Activated CD8-positive, alpha-beta memory T cell treated with anti-CD3 and anti-CD28 coated beads, Interleukin-2, amount 10 ng/mL, durations not matched to agents 7 days and 5 days (primary cell): ENCODE measurements at regions of chr12 and their contacts with region 1.

Region 1: DNA sequence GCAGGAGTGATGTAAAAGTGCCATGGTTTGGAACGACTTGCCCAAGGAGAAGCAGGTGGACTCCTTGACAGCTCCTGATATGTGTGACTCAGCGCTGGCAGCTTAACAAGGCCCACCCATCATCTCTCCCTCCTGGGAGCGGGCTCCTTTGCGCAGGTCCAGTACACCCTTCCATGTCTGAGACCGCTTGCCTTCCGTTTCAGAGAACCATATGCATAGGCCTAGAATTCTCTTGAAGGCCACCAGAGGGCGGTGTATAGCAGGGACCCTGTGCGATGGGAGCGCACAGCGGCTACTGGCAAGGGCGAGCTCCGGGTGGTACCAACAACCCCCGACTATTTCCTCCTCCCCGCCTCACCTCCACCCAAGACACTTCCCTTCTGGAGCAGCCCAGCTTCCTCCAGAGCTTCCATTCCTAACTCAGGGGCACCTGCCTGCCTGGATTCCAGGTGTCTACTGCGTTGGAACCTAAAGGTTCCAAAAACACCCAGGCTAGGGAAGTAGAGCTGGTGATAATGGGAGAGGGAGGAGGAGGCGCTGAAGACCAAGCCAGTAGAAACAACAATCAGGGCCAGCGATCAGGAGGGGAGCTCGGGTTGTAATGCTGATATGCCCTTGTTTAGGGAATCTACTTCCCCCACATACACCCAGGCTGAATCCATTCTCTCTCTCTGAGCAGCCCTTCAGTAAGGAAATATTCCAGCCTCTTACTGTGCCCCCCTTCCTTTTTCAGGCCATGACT is 6.2 kb downstream of the DHH start:
- DNase-seq: peak; percentile 82
- ATAC-seq: peak; percentile 86
- H3K4me3 Mint-ChIP-seq: no peak overlapping the region
- H3K27ac Mint-ChIP-seq: peak overlapping the region; percentile 6
- H3K4me1 Mint-ChIP-seq: peaks cover 68% of the 10 kb centered on the region
- H3K27me3 Mint-ChIP-seq: peaks cover 45% of the 10 kb centered on the region

Region 2: GRCh38 chr12:48750769-48751735 is 337.3 kb before region 1 on chr12:
- CTCF ChIA-PET with region 1: no interaction called
- DNase-seq: no peak
- ATAC-seq: peak; percentile 67
- H3K4me3 Mint-ChIP-seq: no peak overlapping the region
- H3K27ac Mint-ChIP-seq: peak overlapping the region; percentile 6
- H3K4me1 Mint-ChIP-seq: peaks cover 12% of the 10 kb centered on the region
- H3K27me3 Mint-ChIP-seq: peaks cover 11% of the 10 kb centered on the region

Region 3: GRCh38 chr12:48995061-48995879 is 93.1 kb before region 1 on chr12:
- CTCF ChIA-PET with region 1: interaction called, 28 read pairs
- DNase-seq: peak; percentile 65
- ATAC-seq: peak; percentile 44
- H3K4me3 Mint-ChIP-seq: no peak overlapping the region
- H3K27ac Mint-ChIP-seq: no peak overlapping the region
- H3K4me1 Mint-ChIP-seq: peaks cover 33% of the 10 kb centered on the region
- H3K27me3 Mint-ChIP-seq: peaks cover 60% of the 10 kb centered on the region

Region 4: DNA sequence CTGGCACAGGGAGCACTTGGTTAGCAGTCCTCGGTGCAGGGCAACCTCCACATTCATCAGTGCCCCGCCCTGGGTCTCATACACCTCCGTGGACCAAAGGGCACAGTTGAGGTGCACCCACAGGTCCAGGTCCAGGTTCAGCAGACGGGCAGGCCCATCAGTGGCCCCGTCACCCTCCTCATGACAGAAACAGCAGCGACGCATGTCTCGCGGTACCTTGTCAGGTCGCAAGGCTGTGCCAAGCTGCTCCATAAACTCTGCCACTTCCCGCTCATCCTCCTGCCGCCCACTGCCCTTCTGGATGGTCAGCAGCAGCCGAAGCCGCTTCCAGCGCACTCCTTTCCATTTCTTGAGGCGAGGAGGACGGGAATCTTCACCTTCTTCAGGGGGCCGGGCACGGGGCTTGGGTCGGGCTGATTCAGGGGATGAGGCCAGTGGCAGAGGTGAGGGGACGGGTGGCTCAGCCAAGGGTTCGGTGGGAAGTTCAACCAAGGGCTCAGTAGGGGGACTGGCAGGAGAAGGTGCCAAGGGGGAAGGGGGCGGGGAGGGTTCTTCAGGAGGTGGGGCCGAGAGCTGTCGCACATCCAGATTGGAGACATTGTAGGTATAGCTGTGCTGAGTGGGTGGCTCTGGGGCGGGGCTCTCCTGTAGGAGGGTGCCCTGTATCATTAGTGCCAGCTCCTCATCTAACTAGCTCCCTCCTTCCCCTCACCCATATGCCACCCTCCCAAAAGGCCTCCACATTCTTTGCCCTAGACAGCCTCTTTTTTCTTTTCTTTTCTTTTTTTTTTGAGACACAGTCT is 61.5 kb before region 1 on chr12:
- CTCF ChIA-PET with region 1: no interaction called
- DNase-seq: no peak
- ATAC-seq: no peak
- H3K4me3 Mint-ChIP-seq: no peak overlapping the region
- H3K27ac Mint-ChIP-seq: no peak overlapping the region
- H3K4me1 Mint-ChIP-seq: no peaks in the 10 kb centered on the region
- H3K27me3 Mint-ChIP-seq: no peaks in the 10 kb centered on the region

Region 5: GRCh38 chr12:49043856-49044258 is 44.5 kb before region 1 on chr12:
- CTCF ChIA-PET with region 1: interaction called, 17 read pairs
- DNase-seq: peak; percentile 87
- ATAC-seq: peak; percentile 87
- H3K4me3 Mint-ChIP-seq: no peak overlapping the region
- H3K27ac Mint-ChIP-seq: peak overlapping the region; percentile 0
- H3K4me1 Mint-ChIP-seq: peaks cover 8% of the 10 kb centered on the region
- H3K27me3 Mint-ChIP-seq: no peaks in the 10 kb centered on the region

Region 6: DNA sequence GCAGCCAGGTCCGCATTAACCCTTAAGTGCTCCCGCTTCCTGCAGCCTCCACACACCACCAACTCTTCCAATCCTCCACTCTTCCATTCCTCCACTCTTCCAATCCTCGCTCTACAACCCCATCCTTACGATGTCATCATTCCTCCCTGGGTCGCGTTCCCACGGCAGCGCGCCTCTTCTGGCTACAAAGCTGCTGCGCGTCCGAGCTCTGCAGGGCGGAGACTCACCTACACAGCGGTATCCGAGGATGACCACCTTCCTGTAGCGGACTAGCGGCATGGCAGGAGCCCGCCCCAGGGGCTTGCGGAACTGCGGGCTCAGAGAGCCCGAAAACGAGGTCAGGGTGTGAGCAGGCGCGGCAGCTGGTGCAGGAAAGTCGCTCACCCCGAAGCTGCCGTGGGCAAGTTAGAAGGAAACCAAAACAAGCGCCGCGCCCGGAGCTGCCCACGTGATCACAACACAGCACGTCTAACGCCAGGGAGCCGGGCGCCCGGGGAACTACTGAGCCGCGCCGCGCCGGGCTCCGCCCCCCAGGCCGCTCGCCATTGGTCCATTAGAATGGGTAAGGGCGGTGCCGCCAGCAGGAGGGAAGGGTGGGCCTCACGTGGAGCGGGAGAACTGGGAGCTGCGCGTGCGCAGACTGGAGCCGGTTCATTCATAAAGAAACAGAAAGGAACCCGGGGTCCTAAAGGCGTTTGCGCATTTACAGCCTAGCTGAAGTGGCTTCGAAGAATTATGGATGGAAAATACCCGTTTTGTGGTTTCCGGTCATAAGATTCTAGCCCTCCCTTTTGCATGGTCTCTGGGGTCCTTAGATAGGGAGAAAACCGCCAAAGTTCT is 18.6 kb before region 1 on chr12 and contains the start of gene RHEBL1:
- CTCF ChIA-PET with region 1: interaction called, 222 read pairs
- DNase-seq: peak; percentile 100
- ATAC-seq: peak; percentile 99
- H3K4me3 Mint-ChIP-seq: peak within 1 kb of the TSS; percentile 87
- H3K27ac Mint-ChIP-seq: peak within 1 kb of the TSS; percentile 92
- H3K4me1 Mint-ChIP-seq: peaks cover 29% of the 10 kb centered on the region
- H3K27me3 Mint-ChIP-seq: no peaks in the 10 kb centered on the region
- total RNA-seq, gene RHEBL1: 14.9 to 15.1 TPM

Region 7: GRCh38 chr12:49121047-49121696 is 32.8 kb after region 1 on chr12:
- CTCF ChIA-PET with region 1: interaction called, 14 read pairs
- DNase-seq: no peak
- ATAC-seq: no peak
- H3K4me3 Mint-ChIP-seq: no peak overlapping the region
- H3K27ac Mint-ChIP-seq: no peak overlapping the region
- H3K4me1 Mint-ChIP-seq: no peaks in the 10 kb centered on the region
- H3K27me3 Mint-ChIP-seq: no peaks in the 10 kb centered on the region

Region 8: GRCh38 chr12:49232940-49233841 is 144.8 kb after region 1 on chr12:
- CTCF ChIA-PET with region 1: interaction called, 20 read pairs
- DNase-seq: no peak
- ATAC-seq: no peak
- H3K4me3 Mint-ChIP-seq: no peak overlapping the region
- H3K27ac Mint-ChIP-seq: no peak overlapping the region
- H3K4me1 Mint-ChIP-seq: peaks cover 22% of the 10 kb centered on the region
- H3K27me3 Mint-ChIP-seq: peaks cover 6% of the 10 kb centered on the region